CD4-positive, alpha-beta memory T cell (primary cell): ENCODE measurements at regions of chr12 and their contacts with region 1.

Region 1: GRCh38 chr12:121773011-121773777 is 20.3 kb downstream of the RHOF start:
- DNase-seq: peak; percentile 76 to 82 (median 78)
- H3K4me3 ChIP-seq: no peak overlapping the region
- H3K4me3 Mint-ChIP-seq: no peak overlapping the region
- H3K27ac ChIP-seq: no peak overlapping the region
- H3K27ac Mint-ChIP-seq: peak overlapping the region; percentile 68 to 87 (median 78)
- H3K4me1 ChIP-seq: peaks cover 23% of the 10 kb centered on the region
- H3K4me1 Mint-ChIP-seq: peaks cover 5 to 14% (median 11%) of the 10 kb centered on the region in 4 donors
- H3K27me3 ChIP-seq: no peaks in the 10 kb centered on the region
- H3K27me3 Mint-ChIP-seq: no peaks in the 10 kb centered on the region

Region 2: GRCh38 chr12:121499929-121500793 is 273.0 kb before region 1 on chr12:
- CTCF ChIA-PET with region 1: interaction called, 4 read pairs
- POLR2A ChIA-PET with region 1: no interaction called
- intact Hi-C with region 1: loop called (anchors 1 kb)
- DNase-seq: peak; percentile 62 to 72 (median 71)
- H3K4me3 ChIP-seq: no peak overlapping the region
- H3K4me3 Mint-ChIP-seq: peak overlapping the region in 1 of 8 donors; percentile 11
- H3K27ac ChIP-seq: no peak overlapping the region
- H3K27ac Mint-ChIP-seq: peak overlapping the region in 3 of 7 donors; percentile 17 to 74 (median 63)
- H3K4me1 ChIP-seq: peaks cover 17% of the 10 kb centered on the region
- H3K4me1 Mint-ChIP-seq: peaks cover 8 to 21% (median 15%) of the 10 kb centered on the region in 4 donors
- H3K27me3 ChIP-seq: no peaks in the 10 kb centered on the region
- H3K27me3 Mint-ChIP-seq: no peaks in the 10 kb centered on the region

Region 3: GRCh38 chr12:121649819-121650353 is 123.3 kb before region 1 on chr12:
- CTCF ChIA-PET with region 1: no interaction called
- POLR2A ChIA-PET with region 1: no interaction called
- intact Hi-C with region 1: no loop called
- DNase-seq: peak; percentile 47 to 65 (median 54)
- H3K4me3 ChIP-seq: no peak overlapping the region
- H3K4me3 Mint-ChIP-seq: peak overlapping the region in 7 of 8 donors; percentile 6 to 79 (median 53)
- H3K27ac ChIP-seq: peak overlapping the region; percentile 10
- H3K27ac Mint-ChIP-seq: peak overlapping the region; percentile 79 to 95 (median 87)
- H3K4me1 ChIP-seq: peaks cover 21% of the 10 kb centered on the region
- H3K4me1 Mint-ChIP-seq: peaks cover 20 to 39% (median 29%) of the 10 kb centered on the region in 4 donors
- H3K27me3 ChIP-seq: no peaks in the 10 kb centered on the region
- H3K27me3 Mint-ChIP-seq: no peaks in the 10 kb centered on the region

Region 4: GRCh38 chr12:121705514-121705913 is 67.7 kb before region 1 on chr12:
- CTCF ChIA-PET with region 1: interaction called, 120 read pairs
- POLR2A ChIA-PET with region 1: no interaction called
- intact Hi-C with region 1: loop called (anchors 2 kb)
- DNase-seq: no peak
- H3K4me3 ChIP-seq: no peak overlapping the region
- H3K4me3 Mint-ChIP-seq: no peak overlapping the region
- H3K27ac ChIP-seq: no peak overlapping the region
- H3K27ac Mint-ChIP-seq: no peak overlapping the region
- H3K4me1 ChIP-seq: no peaks in the 10 kb centered on the region
- H3K4me1 Mint-ChIP-seq: peaks cover 0 to 2% (median 0%) of the 10 kb centered on the region in 4 donors
- H3K27me3 ChIP-seq: no peaks in the 10 kb centered on the region
- H3K27me3 Mint-ChIP-seq: peaks cover 0 to 2% of the 10 kb centered on the region in 2 donors

Region 5: DNA sequence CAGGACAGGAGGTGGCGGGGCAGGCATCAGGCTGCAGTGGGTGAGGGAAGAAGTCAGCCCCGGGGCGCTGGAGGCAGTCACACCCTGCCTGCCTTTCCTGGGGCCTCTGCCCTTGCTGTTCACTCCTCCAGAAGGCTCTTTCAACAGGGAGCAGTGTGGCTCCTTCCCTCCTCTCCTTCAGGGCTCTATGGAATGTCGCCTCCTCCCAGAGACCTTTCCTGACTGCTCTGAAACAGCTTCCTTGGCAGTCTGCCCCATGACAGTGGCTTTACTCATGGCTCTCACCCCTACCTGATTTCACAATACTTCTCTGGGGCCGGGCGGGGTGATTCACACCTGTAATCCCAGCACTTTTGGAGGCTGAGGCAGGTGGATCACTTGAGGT is 13.2 kb after region 1 on chr12:
- CTCF ChIA-PET with region 1: interaction called, 559 read pairs
- POLR2A ChIA-PET with region 1: interaction called, 2,727 read pairs
- intact Hi-C with region 1: no loop called
- DNase-seq: peak; percentile 39 to 83 (median 46)
- H3K4me3 ChIP-seq: peak overlapping the region in 1 of 2 donors; percentile 49
- H3K4me3 Mint-ChIP-seq: peak overlapping the region; percentile 82 to 99 (median 89)
- H3K27ac ChIP-seq: peak overlapping the region; percentile 97
- H3K27ac Mint-ChIP-seq: peak overlapping the region; percentile 98 to 100 (median 99)
- H3K4me1 ChIP-seq: peaks cover 94% of the 10 kb centered on the region
- H3K4me1 Mint-ChIP-seq: peaks cover 62 to 96% (median 80%) of the 10 kb centered on the region in 4 donors
- H3K27me3 ChIP-seq: no peaks in the 10 kb centered on the region
- H3K27me3 Mint-ChIP-seq: no peaks in the 10 kb centered on the region

Region 6: GRCh38 chr12:121888478-121889266 is 115.5 kb after region 1 on chr12 and contains the start of gene PSMD9:
- CTCF ChIA-PET with region 1: interaction called, 5 read pairs
- POLR2A ChIA-PET with region 1: interaction called, 5 read pairs
- intact Hi-C with region 1: loop called (anchors 1 kb)
- DNase-seq: peak; percentile 97 to 99 (median 98)
- H3K4me3 ChIP-seq: peak within 1 kb of the TSS; percentile 77 to 88
- H3K4me3 Mint-ChIP-seq: peak within 1 kb of the TSS; percentile 96 to 99 (median 98)
- H3K27ac ChIP-seq: peak within 1 kb of the TSS; percentile 91
- H3K27ac Mint-ChIP-seq: peak within 1 kb of the TSS; percentile 99 to 100 (median 99)
- H3K4me1 ChIP-seq: peaks cover 29% of the 10 kb centered on the region
- H3K4me1 Mint-ChIP-seq: peaks cover 19 to 43% (median 33%) of the 10 kb centered on the region in 4 donors
- H3K27me3 ChIP-seq: no peaks in the 10 kb centered on the region
- H3K27me3 Mint-ChIP-seq: peaks cover 0 to 3% of the 10 kb centered on the region in 2 donors
- total RNA-seq, gene PSMD9: 41.4 to 42.7 TPM